ENCODE measurements at regions of chr1 and their contacts with region 1.

Region 1: GRCh38 chr1:234309598-234310459 is 63.4 kb upstream of the COA6 start:
- DNase-seq: peak; percentile 84
- ATAC-seq: peak; percentile 97
- H3K4me3 Mint-ChIP-seq: no peak overlapping the region
- H3K27ac Mint-ChIP-seq: no peak overlapping the region
- H3K4me1 Mint-ChIP-seq: peaks cover 16% of the 10 kb centered on the region
- H3K27me3 Mint-ChIP-seq: peaks cover 5% of the 10 kb centered on the region
- CTCF ChIP-seq: peak; percentile 88

Region 2: DNA sequence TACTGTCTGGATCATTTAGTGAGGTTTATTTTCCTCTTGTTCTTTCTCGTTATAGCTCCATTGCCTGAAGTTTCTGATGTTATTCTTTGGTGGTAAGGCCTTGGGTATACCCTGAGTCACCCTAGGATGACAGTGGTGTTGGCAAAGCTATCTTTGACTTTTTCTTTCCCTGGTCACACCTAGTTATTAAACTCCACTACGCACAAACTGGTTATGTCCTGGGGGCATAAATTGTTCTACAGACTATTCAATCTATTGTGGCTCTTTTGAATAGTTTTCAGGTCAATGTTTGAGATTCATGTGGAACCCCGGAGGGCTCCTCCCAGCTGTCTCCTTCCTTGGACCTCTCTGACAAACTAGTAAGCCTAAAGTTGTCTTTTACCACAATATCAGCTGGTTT is 247.7 kb before region 1 on chr1:
- CTCF ChIA-PET with region 1: no interaction called
- POLR2A ChIA-PET with region 1: no interaction called
- intact Hi-C with region 1: no loop called
- DNase-seq: no peak
- ATAC-seq: no peak
- H3K4me3 Mint-ChIP-seq: no peak overlapping the region
- H3K27ac Mint-ChIP-seq: no peak overlapping the region
- H3K4me1 Mint-ChIP-seq: no peaks in the 10 kb centered on the region
- H3K27me3 Mint-ChIP-seq: peaks cover 6% of the 10 kb centered on the region
- CTCF ChIP-seq: no peak

Region 3: GRCh38 chr1:234125283-234125682 is 184.5 kb before region 1 on chr1:
- CTCF ChIA-PET with region 1: interaction called, 74 read pairs
- POLR2A ChIA-PET with region 1: interaction called, 3 read pairs
- intact Hi-C with region 1: no loop called
- DNase-seq: peak; percentile 75
- ATAC-seq: peak; percentile 78
- H3K4me3 Mint-ChIP-seq: no peak overlapping the region
- H3K27ac Mint-ChIP-seq: no peak overlapping the region
- H3K4me1 Mint-ChIP-seq: no peaks in the 10 kb centered on the region
- H3K27me3 Mint-ChIP-seq: peaks cover 14% of the 10 kb centered on the region
- CTCF ChIP-seq: peak; percentile 39

Region 4: GRCh38 chr1:234188454-234188792 is 121.4 kb before region 1 on chr1:
- CTCF ChIA-PET with region 1: interaction called, 13 read pairs
- POLR2A ChIA-PET with region 1: no interaction called
- intact Hi-C with region 1: no loop called
- DNase-seq: peak; percentile 37
- ATAC-seq: no peak
- H3K4me3 Mint-ChIP-seq: no peak overlapping the region
- H3K27ac Mint-ChIP-seq: no peak overlapping the region
- H3K4me1 Mint-ChIP-seq: no peaks in the 10 kb centered on the region
- H3K27me3 Mint-ChIP-seq: peaks cover 32% of the 10 kb centered on the region
- CTCF ChIP-seq: no peak

Region 5: GRCh38 chr1:234260578-234260977 is 49.3 kb before region 1 on chr1:
- CTCF ChIA-PET with region 1: interaction called, 22 read pairs
- POLR2A ChIA-PET with region 1: no interaction called
- intact Hi-C with region 1: loop called (anchors 5 kb)
- DNase-seq: peak; percentile 53
- ATAC-seq: peak; percentile 86
- H3K4me3 Mint-ChIP-seq: no peak overlapping the region
- H3K27ac Mint-ChIP-seq: peak overlapping the region; percentile 12
- H3K4me1 Mint-ChIP-seq: peaks cover 8% of the 10 kb centered on the region
- H3K27me3 Mint-ChIP-seq: peaks cover 25% of the 10 kb centered on the region
- CTCF ChIP-seq: no peak

Region 6: DNA sequence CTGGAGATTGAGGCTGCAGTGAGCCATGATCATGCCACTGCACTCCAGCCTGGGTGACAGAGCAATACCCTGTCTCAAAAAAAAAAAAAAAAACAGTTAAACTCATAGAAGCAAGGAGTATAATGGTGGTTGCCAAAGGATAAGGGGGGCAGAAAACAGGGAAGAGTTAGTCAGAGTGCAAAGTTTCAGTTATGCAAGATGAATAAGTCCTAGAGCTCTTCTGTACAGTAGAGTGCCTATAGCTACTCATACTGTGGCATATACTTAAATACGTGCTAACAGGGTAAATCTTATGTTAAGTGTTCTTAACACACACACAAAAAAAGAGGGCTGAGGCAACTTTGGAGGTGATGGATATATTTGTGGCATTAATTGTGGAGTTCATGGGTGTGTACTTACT is 12.2 kb before region 1 on chr1:
- CTCF ChIA-PET with region 1: interaction called, 27 read pairs
- POLR2A ChIA-PET with region 1: no interaction called
- intact Hi-C with region 1: no loop called
- DNase-seq: no peak
- ATAC-seq: no peak
- H3K4me3 Mint-ChIP-seq: no peak overlapping the region
- H3K27ac Mint-ChIP-seq: no peak overlapping the region
- H3K4me1 Mint-ChIP-seq: no peaks in the 10 kb centered on the region
- H3K27me3 Mint-ChIP-seq: peaks cover 14% of the 10 kb centered on the region
- CTCF ChIP-seq: no peak

Region 7: GRCh38 chr1:234342774-234343173 is 32.9 kb after region 1 on chr1:
- CTCF ChIA-PET with region 1: interaction called, 12 read pairs
- POLR2A ChIA-PET with region 1: interaction called, 3 read pairs
- intact Hi-C with region 1: no loop called
- DNase-seq: no peak
- ATAC-seq: no peak
- H3K4me3 Mint-ChIP-seq: no peak overlapping the region
- H3K27ac Mint-ChIP-seq: no peak overlapping the region
- H3K4me1 Mint-ChIP-seq: no peaks in the 10 kb centered on the region
- H3K27me3 Mint-ChIP-seq: peaks cover 3% of the 10 kb centered on the region
- CTCF ChIP-seq: no peak

Region 8: GRCh38 chr1:234413990-234414389 is 104.2 kb after region 1 on chr1:
- CTCF ChIA-PET with region 1: no interaction called
- POLR2A ChIA-PET with region 1: no interaction called
- intact Hi-C with region 1: no loop called
- DNase-seq: no peak
- ATAC-seq: no peak
- H3K4me3 Mint-ChIP-seq: no peak overlapping the region
- H3K27ac Mint-ChIP-seq: no peak overlapping the region
- H3K4me1 Mint-ChIP-seq: peaks cover 3% of the 10 kb centered on the region
- H3K27me3 Mint-ChIP-seq: no peaks in the 10 kb centered on the region
- CTCF ChIP-seq: no peak

Measured in activated CD8-positive, alpha-beta T cell treated with anti-CD3 and anti-CD28 coated beads for 36 hours (primary cell).